ENCODE measurements at regions of chr6 and their contacts with region 1.

Region 1: GRCh38 chr6:165850434-165851019 is 187.5 kb upstream of the PDE10A start:
- DNase-seq: peak; percentile 84
- CTCF ChIP-seq: peak; percentile 98

Region 2: DNA sequence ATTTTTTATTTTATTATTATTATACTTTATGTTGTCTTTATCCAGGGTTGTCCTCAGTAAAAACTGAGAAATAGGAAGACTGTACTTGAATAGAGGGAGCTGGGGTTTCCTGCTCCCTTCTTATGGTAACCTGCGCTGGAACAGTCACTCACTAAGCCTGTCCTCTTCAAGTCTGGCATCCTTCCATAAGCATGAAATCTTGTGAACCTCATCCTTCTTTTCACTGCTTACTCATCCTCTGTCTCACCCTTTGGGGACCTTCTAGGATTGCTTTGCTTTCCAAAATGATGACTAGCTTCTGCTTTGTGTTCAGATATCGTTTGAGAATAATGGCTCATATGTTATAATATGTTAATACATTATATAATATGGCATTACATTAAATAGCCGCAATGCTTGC is 631.7 kb before region 1 on chr6:
- in situ Hi-C with region 1: no loop called
- DNase-seq: no peak
- CTCF ChIP-seq: no peak

Region 3: GRCh38 chr6:165439928-165440554 is 410.5 kb before region 1 on chr6:
- in situ Hi-C with region 1: loop called (anchors 25 kb)
- DNase-seq: peak; percentile 15
- CTCF ChIP-seq: peak; percentile 30